ENCODE measurements at regions of chr15 and their contacts with region 1.

Region 1: DNA sequence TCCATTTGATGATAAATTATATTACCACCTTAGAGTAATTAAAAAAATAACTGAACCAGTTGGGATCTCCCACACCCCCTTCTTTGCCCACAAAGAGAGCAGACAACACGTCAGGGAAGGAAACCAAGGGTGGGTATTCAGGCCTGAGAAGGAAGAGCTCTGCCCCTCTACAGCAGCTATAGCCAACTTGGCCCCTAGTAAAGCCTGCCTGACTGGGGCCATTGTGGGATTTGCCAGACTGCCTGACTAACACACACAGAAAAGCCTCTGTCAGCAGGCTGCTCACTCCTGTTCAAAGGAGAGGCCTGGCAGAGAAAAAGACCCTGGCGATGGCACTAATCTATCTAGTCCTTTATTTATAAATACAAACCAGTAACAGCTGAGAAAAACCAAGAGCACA is 41.4 kb downstream of the ATP8B4 start:
- DNase-seq: no peak
- H3K4me3 ChIP-seq: no peak overlapping the region
- H3K27ac ChIP-seq: peak overlapping the region in 2 of 4 donors; percentile 57 to 60
- H3K4me1 ChIP-seq: peaks cover 0 to 6% (median 0%) of the 10 kb centered on the region in 4 donors
- H3K27me3 ChIP-seq: no peaks in the 10 kb centered on the region
- CTCF ChIP-seq: no peak
- EP300 ChIP-seq: no peak
- POLR2A ChIP-seq: no peak

Region 2: GRCh38 chr15:50067254-50067653 is 10.4 kb before region 1 on chr15:
- in situ Hi-C with region 1: no loop called
- intact Hi-C with region 1: loop called (anchors 1 kb)
- DNase-seq: no peak
- H3K4me3 ChIP-seq: no peak overlapping the region
- H3K27ac ChIP-seq: peak overlapping the region in 3 of 4 donors; percentile 21 to 62 (median 44)
- H3K4me1 ChIP-seq: peaks cover 8 to 28% (median 13%) of the 10 kb centered on the region in 4 donors
- H3K27me3 ChIP-seq: no peaks in the 10 kb centered on the region
- CTCF ChIP-seq: no peak
- EP300 ChIP-seq: no peak
- POLR2A ChIP-seq: no peak